MCF 10A (cell line): ENCODE measurements at regions of chr12 and their contacts with region 1.

Region 1: DNA sequence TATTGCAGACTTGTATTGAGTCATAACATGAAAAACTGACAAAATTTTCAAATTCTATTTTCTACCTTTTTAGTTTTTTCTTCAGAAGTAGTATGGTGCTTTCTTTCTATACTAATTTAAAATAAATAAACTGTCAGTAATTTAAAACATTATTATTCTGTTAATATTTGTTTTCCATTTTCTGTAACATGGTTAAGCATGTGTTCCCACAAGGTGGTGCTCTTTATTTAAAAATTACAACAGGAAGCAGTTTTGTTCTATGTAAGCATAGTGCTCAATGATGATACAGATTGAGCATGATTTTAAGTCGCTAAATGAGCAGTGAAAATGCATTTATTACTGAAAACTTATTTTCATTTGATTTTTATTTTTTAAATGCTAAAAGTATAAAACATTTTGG is 114.6 kb downstream of the PPFIA2 start:
- DNase-seq: peak; percentile 51
- H3K4me3 Mint-ChIP-seq: no peak overlapping the region
- H3K27ac Mint-ChIP-seq: no peak overlapping the region
- H3K4me1 Mint-ChIP-seq: peaks cover under 1% of the 10 kb centered on the region
- H3K27me3 Mint-ChIP-seq: peaks cover 25% of the 10 kb centered on the region
- CTCF ChIP-seq: peak; percentile 46

Region 2: DNA sequence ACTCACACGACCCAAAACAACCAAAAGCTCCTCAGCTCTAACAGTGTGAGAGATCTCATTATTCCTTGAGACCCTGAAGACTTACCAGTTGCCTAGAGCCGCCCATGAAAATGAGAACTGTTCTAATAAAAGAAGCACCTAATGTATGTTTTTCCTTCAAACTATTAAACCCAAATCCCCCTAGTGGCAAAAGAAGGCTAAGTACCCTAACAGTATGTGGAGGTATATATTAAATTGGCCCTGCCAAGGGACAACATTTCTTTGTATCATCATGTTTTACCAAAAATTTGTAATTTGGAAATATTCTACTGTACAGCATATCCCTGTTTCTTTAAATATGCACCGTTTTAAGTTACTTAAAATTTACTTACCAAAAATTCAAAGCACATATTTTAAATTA is 152.6 kb after region 1 on chr12:
- CTCF ChIA-PET with region 1: interaction called, 5 read pairs
- POLR2A ChIA-PET with region 1: no interaction called
- intact Hi-C with region 1: loop called (anchors 1 kb)
- DNase-seq: peak; percentile 55
- H3K4me3 Mint-ChIP-seq: no peak overlapping the region
- H3K27ac Mint-ChIP-seq: no peak overlapping the region
- H3K4me1 Mint-ChIP-seq: no peaks in the 10 kb centered on the region
- H3K27me3 Mint-ChIP-seq: peaks cover 40% of the 10 kb centered on the region
- CTCF ChIP-seq: peak; percentile 31

Region 3: DNA sequence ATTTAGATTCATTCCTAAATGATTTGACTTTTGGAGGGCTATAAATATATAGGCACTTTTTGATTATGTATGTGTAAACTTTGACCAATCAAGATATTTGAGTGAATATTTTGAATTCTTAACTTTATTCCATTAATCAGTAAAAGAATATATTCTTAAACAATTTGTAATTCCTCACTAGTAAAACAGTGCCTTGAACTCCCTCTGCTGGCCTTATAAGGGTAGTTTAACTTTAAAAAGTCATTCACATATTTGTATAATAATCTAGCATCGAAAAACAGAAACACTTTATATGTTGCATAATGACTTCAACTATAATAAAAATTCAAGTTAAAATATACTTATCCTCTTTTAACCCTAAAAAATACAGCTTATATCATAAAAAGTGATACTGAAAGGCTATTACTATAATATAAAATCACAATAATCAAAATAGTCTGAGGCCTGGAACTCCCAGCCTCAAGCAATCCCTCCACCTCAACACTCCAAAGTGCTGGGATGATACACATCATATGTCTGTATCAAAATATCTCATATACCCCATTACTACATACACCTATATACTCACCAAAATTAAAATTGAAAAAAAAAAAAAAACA is 682.5 kb after region 1 on chr12:
- CTCF ChIA-PET with region 1: interaction called, 23 read pairs
- POLR2A ChIA-PET with region 1: no interaction called
- intact Hi-C with region 1: loop called (anchors 1 kb)
- DNase-seq: peak; percentile 54
- H3K4me3 Mint-ChIP-seq: no peak overlapping the region
- H3K27ac Mint-ChIP-seq: no peak overlapping the region
- H3K4me1 Mint-ChIP-seq: no peaks in the 10 kb centered on the region
- H3K27me3 Mint-ChIP-seq: no peaks in the 10 kb centered on the region
- CTCF ChIP-seq: peak; percentile 55

Region 4: DNA sequence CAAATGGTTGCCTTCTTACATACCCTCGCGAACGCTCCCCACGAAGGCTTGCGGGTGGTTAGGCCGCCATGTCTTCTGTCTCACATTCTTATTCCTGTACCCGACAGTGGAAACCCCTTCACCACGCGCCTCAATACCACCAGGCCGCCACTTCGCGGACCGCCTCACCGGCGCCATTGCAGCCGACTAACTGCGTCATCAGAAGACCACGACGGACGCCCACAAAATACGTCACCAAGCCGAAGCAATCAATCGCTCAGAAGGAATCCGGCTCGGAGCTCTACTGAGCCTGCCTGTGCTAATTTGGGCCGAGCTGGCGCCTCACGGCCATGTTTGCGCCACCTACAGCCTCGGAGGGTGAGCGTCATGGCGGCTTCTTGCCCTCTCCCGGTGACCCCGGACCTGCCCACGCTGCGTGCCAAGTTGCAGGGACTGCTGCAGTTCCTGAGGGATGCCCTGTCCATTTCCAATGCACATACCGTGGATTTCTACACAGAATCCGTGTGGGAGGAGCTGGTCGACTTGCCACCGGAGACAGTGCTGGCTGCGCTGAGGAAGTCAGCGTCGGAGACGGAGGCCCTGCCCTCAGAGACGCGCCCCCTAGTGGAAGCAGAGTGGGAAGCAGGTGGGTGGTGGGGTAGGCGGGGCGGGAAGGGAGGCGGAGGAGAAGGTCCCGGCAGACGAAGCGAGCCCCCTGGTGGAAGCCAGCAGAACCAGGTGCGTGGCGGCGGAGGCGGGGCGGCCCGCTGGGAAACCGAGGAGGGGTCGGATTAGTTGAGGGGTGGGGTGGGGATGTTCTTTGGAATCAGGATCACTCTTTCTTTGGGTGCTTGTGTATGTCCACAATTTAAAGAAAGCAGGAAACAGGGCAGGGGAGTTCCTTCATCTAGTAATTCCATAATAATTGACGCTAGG is 714.0 kb after region 1 on chr12 and contains the starts of genes CCDC59 and METTL25:
- CTCF ChIA-PET with region 1: interaction called, 16 read pairs
- POLR2A ChIA-PET with region 1: interaction called, 3 read pairs
- intact Hi-C with region 1: loop called (anchors 1 kb)
- DNase-seq: peak; percentile 98
- H3K4me3 Mint-ChIP-seq: peak within 1 kb of the TSS; percentile 86
- H3K27ac Mint-ChIP-seq: peak within 1 kb of the TSS; percentile 99
- H3K4me1 Mint-ChIP-seq: peaks cover 6% of the 10 kb centered on the region
- H3K27me3 Mint-ChIP-seq: no peaks in the 10 kb centered on the region
- CTCF ChIP-seq: peak; percentile 88
- total RNA-seq, gene CCDC59: 72.5 and 85.7 TPM in 2 replicates
- total RNA-seq, gene METTL25: 3.4 and 4.1 TPM in 2 replicates

Region 5: DNA sequence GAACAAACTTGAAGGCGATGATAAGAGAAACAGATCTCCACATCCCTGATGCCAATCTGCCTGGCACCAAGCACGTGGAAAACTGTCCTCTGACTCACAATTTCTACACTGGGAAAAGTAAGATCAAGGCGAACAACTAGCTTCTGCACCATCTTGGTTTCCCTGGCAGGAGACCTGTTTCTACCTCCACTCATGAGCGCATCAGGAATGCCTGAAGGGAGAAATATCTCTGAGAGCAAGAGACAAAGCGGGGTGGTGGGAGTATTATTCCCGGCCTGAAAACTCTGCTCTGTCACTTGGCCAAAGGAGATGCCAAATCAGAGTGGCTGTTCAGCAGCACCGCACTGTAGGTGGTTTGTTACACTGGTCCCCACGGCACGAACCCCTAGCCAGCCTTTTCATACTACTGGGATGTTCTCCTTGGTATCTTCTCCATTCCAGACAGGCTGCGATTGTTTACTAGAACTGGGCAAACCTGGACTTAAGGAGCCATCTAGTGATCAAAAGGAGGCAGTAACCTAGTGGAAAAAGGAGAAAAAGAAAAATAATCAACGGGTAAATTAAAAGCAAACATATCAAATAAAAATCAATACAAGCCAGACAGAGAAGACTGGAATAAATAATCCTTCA is 983.2 kb after region 1 on chr12:
- CTCF ChIA-PET with region 1: no interaction called
- POLR2A ChIA-PET with region 1: no interaction called
- intact Hi-C with region 1: loop called (anchors 10 kb)
- DNase-seq: peak; percentile 52
- H3K4me3 Mint-ChIP-seq: no peak overlapping the region
- H3K27ac Mint-ChIP-seq: no peak overlapping the region
- H3K4me1 Mint-ChIP-seq: peaks cover 6% of the 10 kb centered on the region
- H3K27me3 Mint-ChIP-seq: no peaks in the 10 kb centered on the region
- CTCF ChIP-seq: peak; percentile 46